Activated T-helper 2 cell treated with anti-CD3 and anti-CD28 coated beads, Interferon-gamma antibody, Interleukin-2, Interleukin-4, amounts not matched to agents 10 μg/mL and 5 μg/mL and 100 μg/mL, durations not matched to agents 14 hours and 24 hours and 36 hours (primary cell): ENCODE measurements at regions of chr11 and their contacts with region 1.

Region 1: DNA sequence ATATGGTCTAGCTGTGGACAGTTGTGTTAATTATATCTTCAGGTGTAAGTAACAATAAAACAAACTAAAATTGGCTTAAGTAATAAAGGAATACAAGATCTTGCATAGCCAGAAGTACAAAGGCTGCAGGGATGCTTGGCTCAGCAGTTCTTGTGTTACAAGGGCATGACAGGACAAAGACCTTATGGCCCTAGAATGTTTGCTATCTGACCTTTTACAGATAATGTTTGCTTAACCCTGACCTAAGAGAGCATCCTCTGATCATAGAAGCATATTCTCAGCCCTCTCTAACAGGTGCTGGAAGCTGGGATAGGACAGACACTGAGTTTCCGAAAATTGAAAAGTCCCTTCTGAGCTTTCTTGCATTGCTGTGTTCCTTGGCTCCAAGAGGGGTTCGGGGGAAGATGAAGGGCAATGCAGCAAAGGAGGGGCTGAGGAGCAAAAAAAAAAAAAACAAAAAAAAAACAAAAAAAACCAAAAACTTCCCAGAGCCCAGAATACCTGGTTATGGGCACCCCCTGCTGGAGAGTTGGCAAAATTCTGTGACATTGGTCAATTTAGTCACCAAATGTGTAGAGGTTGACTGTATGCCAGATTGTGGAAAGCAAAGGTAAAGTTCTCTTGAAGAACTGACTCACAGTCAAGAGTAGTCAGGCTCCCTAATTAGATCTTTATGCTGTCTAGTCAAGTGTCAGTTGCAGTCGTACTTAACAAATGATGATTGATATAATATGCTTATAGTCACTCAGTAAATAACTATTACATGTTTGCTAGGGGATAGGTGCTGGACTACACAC is 10.4 kb upstream of the HIKESHI start:
- DNase-seq: peak; percentile 33
- H3K4me3 Mint-ChIP-seq: no peak overlapping the region
- H3K27ac Mint-ChIP-seq: peak overlapping the region; percentile 74
- H3K4me1 Mint-ChIP-seq: peaks cover 52% of the 10 kb centered on the region
- H3K27me3 Mint-ChIP-seq: no peaks in the 10 kb centered on the region

Region 2: DNA sequence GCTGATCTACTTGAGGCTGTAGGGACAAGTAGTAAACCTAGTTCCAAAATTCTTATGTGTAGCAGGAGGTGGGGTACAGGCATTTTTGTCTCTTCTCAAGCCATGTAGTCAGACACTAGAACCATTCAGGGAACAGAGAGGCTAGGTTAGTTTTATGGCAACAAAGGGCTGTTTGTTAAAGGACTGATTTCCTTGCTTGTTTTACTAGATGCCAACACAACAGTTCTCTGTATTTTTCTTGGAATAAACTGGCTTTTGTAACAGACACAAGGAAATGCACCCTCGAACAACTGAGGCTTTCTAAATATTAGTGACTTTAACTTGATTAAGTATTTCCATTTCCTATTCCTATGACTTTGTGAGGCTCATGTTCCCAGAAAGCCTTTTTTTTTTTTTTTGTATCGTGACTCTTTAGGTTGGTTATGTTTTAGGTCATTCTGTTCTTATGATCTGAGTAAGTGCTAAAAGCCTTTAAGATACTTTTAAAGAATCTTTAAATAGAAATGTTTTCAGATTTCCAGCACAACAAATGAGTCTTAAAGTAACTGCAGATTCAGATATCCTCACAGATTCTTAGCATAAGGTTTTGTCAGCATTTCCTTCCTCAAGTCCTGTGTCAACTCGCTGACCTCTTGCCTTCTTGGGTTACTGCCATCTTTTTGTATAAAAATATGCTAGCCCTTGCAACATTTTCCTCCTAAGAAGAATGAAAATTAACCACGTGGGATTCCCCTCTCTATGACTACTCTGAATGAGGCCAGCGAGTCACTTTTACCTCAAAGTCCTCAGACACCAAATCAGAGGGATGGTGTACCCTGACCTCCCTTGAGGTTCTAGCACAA is 344.0 kb before region 1 on chr11:
- intact Hi-C with region 1: loop called (anchors 1 kb)
- DNase-seq: no peak
- H3K4me3 Mint-ChIP-seq: peak overlapping the region; percentile 15
- H3K27ac Mint-ChIP-seq: peak overlapping the region; percentile 75
- H3K4me1 Mint-ChIP-seq: peaks cover 35% of the 10 kb centered on the region
- H3K27me3 Mint-ChIP-seq: no peaks in the 10 kb centered on the region

Region 3: GRCh38 chr11:86116386-86116726 is 175.3 kb before region 1 on chr11:
- intact Hi-C with region 1: loop called (anchors 1 kb)
- DNase-seq: no peak
- H3K4me3 Mint-ChIP-seq: peak overlapping the region; percentile 22
- H3K27ac Mint-ChIP-seq: peak overlapping the region; percentile 83
- H3K4me1 Mint-ChIP-seq: peaks cover 42% of the 10 kb centered on the region
- H3K27me3 Mint-ChIP-seq: no peaks in the 10 kb centered on the region

Region 4: DNA sequence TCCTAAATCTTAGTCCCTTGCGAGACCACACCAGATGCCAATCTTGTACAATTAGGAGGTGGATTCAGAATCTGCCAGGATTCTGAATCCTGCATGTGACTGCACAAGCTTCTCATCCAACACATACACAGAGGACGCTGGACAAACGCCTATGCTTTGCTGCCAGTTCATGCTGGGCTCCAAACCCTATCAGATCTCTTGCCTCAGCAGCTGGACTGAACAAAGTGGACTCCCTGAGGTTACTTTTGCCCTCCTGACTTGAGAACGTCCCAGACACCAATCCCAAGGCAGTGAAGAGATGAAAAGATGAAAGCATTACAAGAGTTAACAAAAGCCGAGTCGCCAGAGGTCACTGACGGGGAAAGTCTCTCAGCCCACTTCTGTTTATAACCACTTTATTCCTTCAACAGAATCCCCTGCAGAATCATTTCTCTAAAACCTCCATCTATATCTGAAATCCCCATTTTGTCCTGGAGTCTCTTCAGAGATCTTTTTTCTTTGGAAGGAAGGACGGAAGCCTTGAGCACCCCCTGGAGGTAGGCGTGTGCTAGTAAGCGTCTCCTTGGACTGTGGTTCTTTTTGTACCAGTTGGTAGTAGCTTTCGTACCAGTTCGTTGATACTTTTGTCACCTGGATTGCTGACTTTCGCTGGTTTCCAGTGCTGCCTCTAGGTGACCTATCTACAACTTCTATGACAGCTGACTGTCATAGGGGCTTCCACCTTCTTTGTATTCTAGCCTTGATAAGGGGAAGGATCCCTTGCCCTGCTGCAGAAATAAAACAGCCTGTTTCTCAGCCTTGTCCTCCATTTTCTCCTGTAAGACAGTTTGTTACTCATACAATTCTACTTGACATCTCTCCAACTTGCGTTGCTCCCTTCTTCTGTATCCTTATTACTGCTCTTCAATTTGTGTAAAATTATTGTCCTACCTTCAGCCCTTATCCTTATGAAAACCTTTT is 73.3 kb before region 1 on chr11:
- intact Hi-C with region 1: loop called (anchors 1 kb)
- DNase-seq: peak; percentile 49
- H3K4me3 Mint-ChIP-seq: peak overlapping the region; percentile 13
- H3K27ac Mint-ChIP-seq: peak overlapping the region; percentile 70
- H3K4me1 Mint-ChIP-seq: peaks cover 67% of the 10 kb centered on the region
- H3K27me3 Mint-ChIP-seq: no peaks in the 10 kb centered on the region

Region 5: GRCh38 chr11:86447763-86448480 is 156.3 kb after region 1 on chr11:
- intact Hi-C with region 1: loop called (anchors 5 kb)
- DNase-seq: no peak
- H3K4me3 Mint-ChIP-seq: no peak overlapping the region
- H3K27ac Mint-ChIP-seq: no peak overlapping the region
- H3K4me1 Mint-ChIP-seq: peaks cover 36% of the 10 kb centered on the region
- H3K27me3 Mint-ChIP-seq: no peaks in the 10 kb centered on the region